ENCODE measurements at regions of chr5 and their contacts with region 1.

Region 1: GRCh38 chr5:34474573-34475021 is 181.5 kb upstream of the RAI14 start:
- ATAC-seq: peak; percentile 44 to 88 (median 64)
- H3K4me3 ChIP-seq: no peak overlapping the region
- H3K27ac ChIP-seq: no peak overlapping the region
- H3K4me1 ChIP-seq: peaks cover 0 to 3% of the 10 kb centered on the region in 2 donors

Region 2: GRCh38 chr5:33440482-33441240 is 1033.9 kb before region 1 on chr5 and contains the start of gene TARS1:
- in situ Hi-C with region 1: loop called in 3 of 9 experiments (anchors 25 kb)
- ATAC-seq: peak; percentile 89 to 98 (median 97)
- H3K4me3 ChIP-seq: peak within 1 kb of the TSS; percentile 62 to 80 (median 79)
- H3K27ac ChIP-seq: peak within 1 kb of the TSS; percentile 90 to 95
- H3K4me1 ChIP-seq: peaks cover 11 to 13% of the 10 kb centered on the region in 2 donors
- total RNA-seq, gene TARS1: 143 to 300 (median 179) TPM

Region 3: GRCh38 chr5:33997331-33997983 is 477.1 kb before region 1 on chr5:
- in situ Hi-C with region 1: loop called in 1 of 9 experiments (anchors 25 kb)
- ATAC-seq: peak in 4 of 8 experiments; percentile 16 to 73 (median 50)
- H3K4me3 ChIP-seq: no peak overlapping the region
- H3K27ac ChIP-seq: no peak overlapping the region
- H3K4me1 ChIP-seq: peaks cover 26 to 35% of the 10 kb centered on the region in 2 donors

Measured in motor neuron (in vitro differentiated cells).